ENCODE measurements at regions of chr6 and their contacts with region 1.

Region 1: DNA sequence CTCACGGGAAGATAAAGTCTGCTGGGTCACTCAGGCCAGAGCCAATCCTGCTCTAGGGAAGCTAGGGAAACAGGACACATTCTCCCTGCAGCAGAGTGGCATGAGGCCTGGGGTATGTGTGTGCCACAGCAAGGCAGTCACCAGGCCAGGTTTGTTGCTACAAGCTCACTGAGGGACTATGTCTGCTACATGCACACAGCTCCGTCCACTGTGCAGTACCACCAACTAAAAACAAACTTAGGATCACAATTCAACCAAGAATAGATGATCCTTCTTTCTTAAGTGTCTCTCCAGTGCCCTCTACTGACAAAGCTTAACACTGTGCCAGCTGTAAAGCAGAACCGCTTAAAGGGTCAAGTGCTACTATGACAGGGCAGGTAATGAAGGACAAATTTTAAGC is 192.5 kb downstream of the PTPRK start:
- DNase-seq: peak; percentile 1
- H3K4me3 ChIP-seq: no peak overlapping the region; a peak in 1 of 4 replicates
- H3K27ac ChIP-seq: no peak overlapping the region
- H3K4me1 ChIP-seq: peaks cover 2 to 8% of the 10 kb centered on the region in 2 experiments; a peak in 3 of 4 replicates
- H3K27me3 ChIP-seq: no peaks in the 10 kb centered on the region
- CTCF ChIP-seq: peak; percentile 32; the same call in 1 of the 2 replicates
- EP300 ChIP-seq: no peak
- RAD21 ChIP-seq: peak; percentile 60

Region 2: DNA sequence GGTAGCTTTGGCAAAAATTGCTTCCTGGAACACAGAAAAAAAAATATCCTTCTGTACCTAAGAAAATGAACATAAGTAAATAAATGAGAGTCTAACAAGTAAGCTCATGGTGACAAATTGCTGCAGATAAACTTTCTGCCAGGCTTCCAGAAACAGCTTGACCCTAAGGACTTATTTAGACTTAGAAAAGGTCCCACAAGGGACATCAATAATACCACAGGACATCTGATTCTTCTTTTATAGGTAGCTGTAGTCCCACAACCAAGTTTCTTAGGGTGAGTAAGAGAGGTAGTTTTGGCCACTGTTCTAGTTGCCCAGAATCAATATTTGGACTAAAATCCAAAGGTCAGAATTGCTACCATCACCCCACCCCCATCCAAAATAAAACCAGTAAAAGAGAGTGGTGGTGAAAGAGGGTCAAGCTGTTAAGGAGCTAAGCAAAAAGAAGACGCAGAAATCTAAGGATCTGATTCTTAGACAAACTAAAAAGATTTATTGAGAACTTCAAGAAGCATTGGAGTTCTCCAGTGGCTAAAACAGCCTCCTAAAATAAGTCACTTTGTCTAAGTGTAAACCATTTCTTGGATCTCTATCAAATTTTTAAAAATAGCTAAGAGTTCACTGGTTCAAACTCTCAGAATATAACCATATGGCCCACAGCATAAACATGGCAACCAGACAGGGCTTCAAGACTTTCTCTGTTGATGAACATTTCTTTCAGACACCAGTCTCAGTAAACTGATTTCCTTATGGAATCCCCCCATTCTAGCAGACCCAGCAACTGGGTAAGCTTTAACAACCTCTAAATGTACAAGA is 12.0 kb after region 1 on chr6:
- CTCF ChIA-PET with region 1: interaction called, 16 read pairs
- POLR2A ChIA-PET with region 1: no interaction called
- DNase-seq: no peak
- H3K4me3 ChIP-seq: no peak overlapping the region
- H3K27ac ChIP-seq: no peak overlapping the region
- H3K4me1 ChIP-seq: peaks cover 0 to 9% of the 10 kb centered on the region in 2 experiments; a peak in 2 of 4 replicates
- H3K27me3 ChIP-seq: no peaks in the 10 kb centered on the region
- CTCF ChIP-seq: no peak
- EP300 ChIP-seq: no peak
- RAD21 ChIP-seq: no peak

Measured in SK-N-SH (cell line).